A549 (cell line): ENCODE measurements at regions of chr1 and their contacts with region 1.

Region 1: GRCh38 chr1:85628791-85629531 is 48.4 kb downstream of the CCN1 start:
- DNase-seq: peak; percentile 73 to 89
- ATAC-seq: peak; percentile 98 to 99
- H3K4me3 ChIP-seq: peak overlapping the region; percentile 24; the same call in 1 of the 3 replicates
- H3K27ac ChIP-seq: peak overlapping the region; percentile 93 to 94
- H3K4me1 ChIP-seq: peaks cover 26% of the 10 kb centered on the region
- CTCF ChIP-seq: no peak
- EP300 ChIP-seq: no peak
- POLR2A ChIP-seq: no peak; the same call in 1 of the 2 replicates
- RAD21 ChIP-seq: peak; percentile 1 to 28; a peak in 4 of 5 replicates

Region 2: DNA sequence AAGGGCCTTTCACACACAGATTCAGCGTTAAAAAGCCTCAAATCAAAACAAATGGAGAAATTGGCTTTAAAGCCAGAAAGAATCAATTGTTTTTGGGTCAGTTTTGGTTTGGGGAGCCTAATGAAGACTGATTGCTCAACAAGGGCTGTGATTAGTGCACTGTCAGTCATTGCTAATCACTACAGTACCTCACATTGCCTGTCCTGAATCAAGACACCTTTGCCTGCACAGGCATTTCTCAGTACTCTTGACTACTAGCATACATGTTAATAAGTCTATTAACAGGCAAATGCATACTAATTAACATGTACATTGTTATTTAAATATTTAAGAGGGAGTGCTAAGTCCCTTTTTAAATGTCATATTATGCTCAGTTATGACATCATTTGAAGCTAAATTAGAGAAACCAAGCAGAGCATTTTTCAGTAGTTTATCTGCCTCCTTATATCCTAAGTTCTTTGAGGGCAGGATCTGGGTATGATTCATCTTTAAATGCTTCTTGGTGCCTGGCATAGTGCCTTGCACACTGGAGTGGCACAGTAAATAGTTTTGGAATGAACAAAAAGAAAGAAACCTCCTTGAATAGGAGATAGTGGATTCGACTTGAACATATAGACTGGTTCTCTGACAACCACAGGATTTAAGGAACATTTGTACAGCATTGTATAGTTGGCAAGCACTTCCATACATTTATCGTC is 74.2 kb before region 1 on chr1:
- CTCF ChIA-PET with region 1: no interaction called
- POLR2A ChIA-PET with region 1: no interaction called
- DNase-seq: no peak
- ATAC-seq: no peak
- H3K4me3 ChIP-seq: no peak overlapping the region
- H3K27ac ChIP-seq: peak overlapping the region in 1 of 2 experiments; percentile 44; a peak in 1 of 6 replicates
- H3K4me1 ChIP-seq: peaks cover 24% of the 10 kb centered on the region
- CTCF ChIP-seq: no peak
- EP300 ChIP-seq: no peak
- POLR2A ChIP-seq: no peak
- RAD21 ChIP-seq: no peak

Region 3: DNA sequence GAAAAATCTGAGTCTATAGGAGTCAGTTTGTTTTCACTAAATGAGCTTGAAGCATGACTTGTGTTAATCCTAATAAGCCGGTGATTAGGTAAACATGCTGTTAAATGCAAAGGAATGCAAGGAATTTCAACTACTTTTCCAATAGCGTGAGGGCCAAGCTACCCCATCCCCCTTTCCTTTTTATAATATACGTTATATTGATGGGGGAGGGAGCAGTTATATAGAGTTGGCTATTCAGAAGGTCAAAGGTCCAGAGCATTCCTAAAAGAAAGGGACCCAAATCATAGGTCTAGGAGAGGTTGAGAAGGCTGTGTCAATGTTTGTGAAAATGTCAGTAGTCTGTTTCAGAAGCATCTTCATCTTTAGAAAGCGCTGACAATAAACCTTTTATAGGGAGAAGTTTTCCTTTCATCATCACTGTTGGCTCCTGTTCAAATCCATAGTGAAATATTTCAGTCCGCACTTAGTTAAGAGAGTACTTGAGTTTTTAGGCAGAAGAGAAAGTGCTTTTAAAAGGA is 44.6 kb before region 1 on chr1:
- CTCF ChIA-PET with region 1: interaction called, 7 read pairs
- POLR2A ChIA-PET with region 1: interaction called, 21 read pairs
- DNase-seq: peak in 1 of 2 experiments; percentile 69
- ATAC-seq: peak; percentile 2 to 5; a peak in 3 of 6 replicates
- H3K4me3 ChIP-seq: peak overlapping the region; percentile 83; the same call in 2 of the 3 replicates
- H3K27ac ChIP-seq: peak overlapping the region; percentile 99 to 100
- H3K4me1 ChIP-seq: peaks cover 44% of the 10 kb centered on the region
- CTCF ChIP-seq: no peak
- EP300 ChIP-seq: peak in 1 of 2 experiments; percentile 32; a peak in 1 of 5 replicates
- POLR2A ChIP-seq: no peak
- RAD21 ChIP-seq: 0 out of 5 replicates have a peak, but pooled peaks of 1 of the 2 experiments have one; percentile 11

Region 4: DNA sequence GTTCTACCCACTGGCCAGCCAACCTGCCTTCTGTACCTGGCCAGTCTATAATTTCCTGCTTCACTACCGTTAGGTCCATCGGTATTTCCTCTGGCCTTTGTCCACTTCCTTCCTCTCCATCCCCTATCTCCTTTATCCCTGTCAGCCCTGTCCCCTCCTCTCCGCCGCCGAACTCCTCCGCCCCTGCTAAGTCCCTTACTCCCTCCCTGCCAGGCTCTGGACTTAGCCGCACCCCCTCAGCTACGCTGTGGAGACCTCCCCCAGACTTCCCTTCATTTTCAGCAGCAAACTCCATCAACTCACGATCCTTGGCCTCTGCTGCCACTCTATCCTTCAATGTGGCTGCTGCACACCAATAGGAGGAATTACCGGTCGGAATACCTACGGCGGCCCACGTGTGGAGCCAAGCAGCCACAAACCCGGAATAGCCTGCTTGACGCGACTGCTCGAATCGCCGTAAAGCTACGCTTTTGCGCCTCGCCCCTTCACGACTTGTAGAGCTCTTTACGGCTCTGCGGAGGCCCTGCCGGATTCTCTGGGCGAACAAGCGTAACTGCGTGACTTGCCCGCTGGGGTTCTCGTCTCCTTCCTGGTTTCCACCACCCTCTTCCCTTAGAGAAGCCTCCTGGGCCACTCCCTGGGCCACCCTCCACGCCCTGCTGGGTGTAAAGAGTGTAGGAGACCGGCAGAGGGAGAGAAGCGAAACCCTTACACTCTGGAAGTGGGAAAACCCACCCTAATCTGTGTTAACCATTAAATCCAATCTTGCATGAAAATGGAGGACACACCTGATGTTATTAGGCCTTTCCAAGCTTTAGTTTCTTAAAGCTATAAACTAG is 79.2 kb after region 1 on chr1 and contains the start of gene ZNHIT6:
- CTCF ChIA-PET with region 1: interaction called, 3 read pairs
- POLR2A ChIA-PET with region 1: interaction called, 10 read pairs
- DNase-seq: peak; percentile 81 to 98
- ATAC-seq: peak; percentile 99 to 100
- H3K4me3 ChIP-seq: peak within 1 kb of the TSS; percentile 99
- H3K27ac ChIP-seq: peak within 1 kb of the TSS; percentile 90 to 96
- H3K4me1 ChIP-seq: peaks cover 8% of the 10 kb centered on the region
- CTCF ChIP-seq: no peak
- EP300 ChIP-seq: no peak
- POLR2A ChIP-seq: peak; percentile 54
- RAD21 ChIP-seq: peak in 1 of 2 experiments; percentile 45; a peak in 3 of 5 replicates
- polyA plus RNA-seq, gene ZNHIT6: 20.3 and 21.2 TPM in 2 replicates

Region 5: GRCh38 chr1:85718678-85719340 is 89.8 kb after region 1 on chr1:
- CTCF ChIA-PET with region 1: no interaction called
- POLR2A ChIA-PET with region 1: no interaction called
- DNase-seq: no peak
- ATAC-seq: no peak
- H3K4me3 ChIP-seq: no peak overlapping the region
- H3K27ac ChIP-seq: no peak overlapping the region
- H3K4me1 ChIP-seq: no peaks in the 10 kb centered on the region
- CTCF ChIP-seq: no peak
- EP300 ChIP-seq: no peak
- POLR2A ChIP-seq: no peak
- RAD21 ChIP-seq: no peak